Posterior cingulate gyrus (tissue), 11 donors: ENCODE measurements at regions of chr15 and their contacts with region 1.

Region 1: DNA sequence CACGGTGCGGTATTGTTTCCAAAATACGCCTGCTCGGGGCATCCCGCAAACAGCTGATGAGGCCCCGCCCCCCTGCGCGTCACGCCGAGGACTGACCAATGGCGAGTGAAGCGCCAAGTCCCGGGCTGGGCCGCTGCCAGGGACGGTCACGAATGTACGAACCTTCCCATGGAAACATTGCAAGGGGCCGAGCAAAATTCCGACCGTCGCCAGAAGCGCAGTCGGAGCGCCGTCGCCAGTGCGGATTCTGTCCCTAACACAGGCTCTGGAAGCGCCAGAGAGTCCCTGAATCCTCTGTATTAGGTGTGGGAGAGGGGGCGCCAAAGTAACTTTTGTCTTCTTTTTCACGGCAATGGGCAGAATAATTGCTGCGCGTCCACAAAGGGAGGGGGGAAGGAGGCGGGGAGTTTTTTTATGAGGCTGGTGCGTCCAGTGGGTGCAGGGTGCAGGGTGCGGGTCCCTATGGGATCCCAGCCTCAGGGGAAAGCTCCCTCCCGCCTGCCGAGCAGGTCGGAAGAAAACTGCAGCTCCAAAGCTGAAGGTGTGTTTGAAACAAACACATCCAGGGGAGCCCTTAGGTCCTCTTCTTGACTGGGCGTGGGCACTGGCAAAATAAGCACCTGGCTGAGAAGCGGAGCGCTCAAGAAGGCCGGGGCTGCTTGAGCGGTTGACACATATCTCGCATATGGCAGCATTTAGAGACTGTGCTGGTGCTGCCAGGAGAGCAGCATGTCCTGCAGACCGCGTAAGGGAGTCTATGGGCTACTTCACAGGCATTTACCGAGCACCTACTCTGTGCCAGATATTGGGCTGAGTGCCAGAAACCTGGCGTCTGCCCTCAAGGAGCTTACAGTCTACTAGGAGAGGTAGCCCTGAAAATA is at the start of gene BMF:
- DNase-seq: peak; percentile 93 to 99 (median 97)

Region 2: DNA sequence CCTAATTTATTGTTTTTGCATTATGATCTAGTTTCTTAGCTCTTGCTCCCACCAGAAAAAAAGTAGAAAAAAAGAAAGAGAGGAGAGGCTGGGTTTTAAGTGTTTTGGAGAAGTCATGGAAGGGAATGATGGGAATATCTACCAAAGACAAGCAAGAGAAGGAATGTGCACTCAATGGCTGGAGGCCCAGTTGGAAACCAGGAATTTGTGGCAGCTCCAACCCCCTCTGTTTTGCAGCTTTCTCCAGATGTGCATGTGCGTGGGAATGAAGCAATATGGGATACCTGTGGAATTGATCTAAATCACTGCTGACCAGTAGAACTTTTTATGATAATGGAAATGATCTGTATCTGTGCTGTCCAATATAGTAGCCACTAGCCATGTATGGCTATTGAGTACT is 148.0 kb before region 1 on chr15:
- intact Hi-C with region 1: no loop called
- DNase-seq: no peak

Region 3: GRCh38 chr15:40044717-40045571 is 64.2 kb before region 1 on chr15:
- intact Hi-C with region 1: loop called (anchors 2 kb)
- DNase-seq: peak; percentile 68 to 97 (median 81)

Region 4: DNA sequence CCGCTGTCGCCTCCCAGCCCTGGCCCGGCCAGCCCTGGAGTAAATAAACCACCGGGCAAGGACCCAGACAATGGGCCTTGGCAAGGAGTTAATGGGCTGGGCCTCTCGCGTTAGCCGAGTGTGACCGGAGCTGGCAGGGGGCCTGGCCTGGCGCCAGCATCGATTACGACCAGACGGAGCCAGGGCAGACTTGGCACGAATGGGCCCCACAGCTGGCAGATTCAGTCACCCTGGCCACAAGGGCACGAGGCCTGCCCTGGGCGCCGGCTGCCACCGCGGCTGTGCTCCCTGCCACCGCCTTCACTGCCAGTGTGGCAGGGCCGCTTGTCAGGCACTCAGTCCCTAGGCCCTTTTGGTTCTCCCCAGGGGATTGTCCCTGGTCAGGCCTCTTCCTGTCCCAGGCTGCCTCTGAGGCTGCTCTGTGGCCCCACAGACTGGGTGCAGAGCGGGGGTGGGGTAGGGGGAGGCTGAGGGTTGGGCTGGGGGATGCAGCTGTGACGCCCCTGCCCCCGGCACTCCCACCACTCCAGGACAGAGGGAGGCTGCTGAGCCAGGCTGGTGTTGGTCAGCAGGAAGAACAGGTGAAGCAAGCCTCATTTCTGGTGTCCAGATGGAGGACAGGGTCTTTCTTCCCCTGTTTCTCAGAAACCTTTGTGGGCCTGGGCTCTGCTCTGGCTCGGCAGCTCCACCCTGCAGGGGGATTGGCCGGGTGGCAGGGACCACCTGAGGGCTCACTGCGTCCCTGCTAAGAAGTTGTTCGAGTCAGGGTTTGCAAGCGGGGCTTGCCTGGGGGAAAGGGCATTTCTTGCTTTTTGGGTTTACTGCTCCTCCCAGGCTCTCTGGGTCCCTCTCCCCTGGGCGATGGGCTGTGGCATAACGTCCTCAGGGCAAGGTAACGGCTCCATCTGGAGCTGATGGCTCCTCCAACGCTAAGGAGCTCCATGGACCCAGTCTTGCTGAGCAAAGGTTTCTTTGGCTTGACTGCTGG is 39.6 kb before region 1 on chr15:
- intact Hi-C with region 1: loop called (anchors 2 kb)
- DNase-seq: peak; percentile 89 to 99 (median 94)

Region 5: GRCh38 chr15:40146037-40146436 is 36.9 kb after region 1 on chr15:
- intact Hi-C with region 1: no loop called
- DNase-seq: no peak

Region 6: GRCh38 chr15:40160689-40161688 is 51.9 kb after region 1 on chr15 and contains the start of gene BUB1B:
- intact Hi-C with region 1: loop called (anchors 5 kb)
- DNase-seq: peak; percentile 79 to 98 (median 92)